ENCODE measurements at regions of chr7 and their contacts with region 1.

Region 1: GRCh38 chr7:44999245-45000095 is 531 bp upstream of the CCM2 start:
- DNase-seq: peak; percentile 100
- H3K4me3 Mint-ChIP-seq: peak overlapping the region; percentile 89
- H3K27ac Mint-ChIP-seq: peak overlapping the region; percentile 95
- H3K4me1 Mint-ChIP-seq: peaks cover 58% of the 10 kb centered on the region
- H3K27me3 Mint-ChIP-seq: no peaks in the 10 kb centered on the region

Region 2: GRCh38 chr7:44606450-44607254 is 392.8 kb before region 1 on chr7 and contains the start of gene OGDH:
- CTCF ChIA-PET with region 1: no interaction called
- POLR2A ChIA-PET with region 1: no interaction called
- intact Hi-C with region 1: loop called (anchors 2 kb)
- DNase-seq: peak; percentile 100
- H3K4me3 Mint-ChIP-seq: peak within 1 kb of the TSS; percentile 82
- H3K27ac Mint-ChIP-seq: peak within 1 kb of the TSS; percentile 98
- H3K4me1 Mint-ChIP-seq: peaks cover 36% of the 10 kb centered on the region
- H3K27me3 Mint-ChIP-seq: no peaks in the 10 kb centered on the region
- total RNA-seq, gene OGDH: 103 to 105 TPM

Region 3: DNA sequence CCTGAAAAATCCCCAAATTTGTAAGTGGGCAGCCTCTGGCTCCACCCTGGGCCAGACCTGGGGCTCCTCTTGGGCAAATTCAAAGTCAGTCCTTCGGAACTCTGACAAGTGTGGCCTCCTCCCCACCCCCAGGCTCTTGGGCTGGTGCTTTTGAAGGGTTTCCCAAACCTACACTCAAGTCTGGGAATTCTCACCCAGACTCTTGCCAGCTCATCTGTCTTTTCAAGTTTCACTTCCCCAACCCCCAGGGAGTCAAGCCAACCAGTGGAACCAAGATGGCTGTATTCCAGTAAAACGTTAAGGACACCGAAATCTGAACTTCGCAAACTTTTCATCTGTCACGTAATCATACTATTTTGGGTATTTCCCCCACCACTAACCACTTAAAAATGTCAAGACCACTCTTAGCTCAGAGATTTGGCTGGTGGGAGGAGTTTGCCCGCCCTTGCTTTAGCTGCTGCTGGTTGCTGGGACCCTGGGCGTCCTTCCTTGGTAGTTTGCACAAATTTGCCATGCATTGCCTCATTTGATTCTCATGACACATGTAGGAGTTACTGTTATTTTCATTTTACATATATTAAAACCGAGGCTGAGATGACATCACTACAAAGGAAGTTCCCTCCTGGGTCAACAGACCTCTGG is 19.0 kb before region 1 on chr7:
- CTCF ChIA-PET with region 1: interaction called, 46 read pairs
- POLR2A ChIA-PET with region 1: interaction called, 208 read pairs
- intact Hi-C with region 1: loop called (anchors 1 kb)
- DNase-seq: peak; percentile 94
- H3K4me3 Mint-ChIP-seq: peak overlapping the region; percentile 97
- H3K27ac Mint-ChIP-seq: peak overlapping the region; percentile 100
- H3K4me1 Mint-ChIP-seq: peaks cover 67% of the 10 kb centered on the region
- H3K27me3 Mint-ChIP-seq: no peaks in the 10 kb centered on the region

Region 4: DNA sequence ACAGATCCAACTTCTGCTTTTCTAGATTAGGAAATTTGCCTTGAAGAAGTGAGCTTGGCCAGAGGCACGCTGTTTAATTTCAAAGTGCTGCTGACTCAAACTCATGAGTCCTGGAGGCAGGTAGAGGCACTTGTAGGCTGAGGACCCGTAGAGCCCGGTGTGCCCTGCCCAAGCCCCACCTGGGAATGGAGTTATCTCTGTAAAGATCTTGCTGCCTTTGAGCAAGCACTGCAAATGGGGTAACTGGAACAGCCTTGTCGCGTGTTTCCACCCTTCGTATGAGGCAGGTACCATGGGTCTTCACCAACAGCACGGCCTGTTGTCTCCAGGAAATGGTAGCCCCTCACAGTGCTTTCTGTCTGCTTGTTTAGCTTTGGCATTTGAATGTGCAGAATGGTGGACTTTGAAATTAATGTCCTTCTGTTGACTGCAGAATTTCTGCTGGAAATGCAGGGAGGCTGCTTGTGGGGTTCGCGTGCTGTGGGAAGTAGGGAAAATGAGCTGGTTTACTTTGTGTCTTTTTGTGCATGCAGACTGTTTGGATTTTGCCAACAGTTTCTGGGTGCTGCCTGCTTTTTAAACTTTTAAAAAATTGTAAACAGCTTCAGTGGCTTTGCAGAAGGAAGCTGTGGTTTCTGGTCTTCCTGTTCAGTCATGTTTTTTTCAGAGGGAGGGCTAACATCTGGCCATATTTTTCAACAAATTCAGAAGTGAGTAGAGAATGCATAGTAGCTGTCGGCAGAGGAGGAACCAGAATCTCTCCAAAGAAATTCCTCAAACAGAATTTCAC is 27.7 kb after region 1 on chr7:
- CTCF ChIA-PET with region 1: interaction called, 8 read pairs
- POLR2A ChIA-PET with region 1: interaction called, 30 read pairs
- intact Hi-C with region 1: loop called (anchors 1 kb)
- DNase-seq: peak; percentile 30
- H3K4me3 Mint-ChIP-seq: peak overlapping the region; percentile 72
- H3K27ac Mint-ChIP-seq: peak overlapping the region; percentile 82
- H3K4me1 Mint-ChIP-seq: peaks cover 80% of the 10 kb centered on the region
- H3K27me3 Mint-ChIP-seq: no peaks in the 10 kb centered on the region

Region 5: DNA sequence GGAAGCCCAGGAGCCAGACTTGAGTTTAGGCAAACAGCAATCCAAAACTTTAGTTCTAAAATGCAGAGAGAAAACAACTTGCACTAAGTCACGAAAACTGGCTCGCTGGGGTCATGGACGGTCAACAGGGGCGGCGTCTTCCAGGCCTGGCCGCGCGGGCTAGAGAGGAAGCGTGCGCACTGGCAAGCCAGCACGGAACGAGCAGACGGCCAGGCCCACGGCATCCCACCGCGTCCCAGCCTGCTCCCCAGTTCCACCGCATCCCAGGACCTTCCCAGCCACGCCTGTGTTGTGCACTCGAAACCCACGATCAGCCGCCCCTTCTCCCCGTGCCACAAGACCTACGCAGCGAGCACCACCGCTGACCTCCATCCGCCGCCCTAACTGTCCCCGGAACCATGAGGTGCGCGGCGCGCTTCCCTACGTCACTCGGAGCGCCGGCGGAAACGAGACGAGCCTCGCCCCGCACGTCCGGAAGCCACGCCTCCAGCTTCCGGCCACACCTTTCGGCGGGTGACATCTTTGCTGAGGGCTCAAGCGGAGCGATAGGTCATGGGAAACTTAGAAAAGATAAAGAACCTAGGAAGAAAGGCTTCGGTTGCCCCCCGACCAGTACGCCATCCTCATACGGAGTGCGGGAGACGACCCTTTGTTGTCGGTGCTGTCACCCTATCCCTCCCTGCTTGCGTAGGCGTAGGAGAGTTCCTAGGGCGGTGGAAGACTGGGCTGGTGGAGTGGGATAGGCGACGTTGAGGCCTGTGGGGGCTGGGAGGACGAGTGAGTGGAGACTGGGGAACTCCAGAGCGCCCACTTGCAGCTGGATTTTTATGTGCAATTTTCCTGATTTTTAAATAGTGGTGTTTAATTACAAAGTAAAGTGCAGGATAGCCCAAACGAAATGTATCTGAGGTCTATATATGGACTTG is 112.1 kb after region 1 on chr7 and contains the start of gene TBRG4:
- CTCF ChIA-PET with region 1: interaction called, 6 read pairs
- POLR2A ChIA-PET with region 1: interaction called, 34 read pairs
- intact Hi-C with region 1: loop called (anchors 1 kb)
- DNase-seq: peak; percentile 96
- H3K4me3 Mint-ChIP-seq: peak within 1 kb of the TSS; percentile 96
- H3K27ac Mint-ChIP-seq: peak within 1 kb of the TSS; percentile 94
- H3K4me1 Mint-ChIP-seq: peaks cover 40% of the 10 kb centered on the region
- H3K27me3 Mint-ChIP-seq: no peaks in the 10 kb centered on the region
- total RNA-seq, gene TBRG4: 135 to 137 TPM